Thyroid gland (tissue), 4 donors: ENCODE measurements at regions of chr4 and their contacts with region 1.

Region 1: DNA sequence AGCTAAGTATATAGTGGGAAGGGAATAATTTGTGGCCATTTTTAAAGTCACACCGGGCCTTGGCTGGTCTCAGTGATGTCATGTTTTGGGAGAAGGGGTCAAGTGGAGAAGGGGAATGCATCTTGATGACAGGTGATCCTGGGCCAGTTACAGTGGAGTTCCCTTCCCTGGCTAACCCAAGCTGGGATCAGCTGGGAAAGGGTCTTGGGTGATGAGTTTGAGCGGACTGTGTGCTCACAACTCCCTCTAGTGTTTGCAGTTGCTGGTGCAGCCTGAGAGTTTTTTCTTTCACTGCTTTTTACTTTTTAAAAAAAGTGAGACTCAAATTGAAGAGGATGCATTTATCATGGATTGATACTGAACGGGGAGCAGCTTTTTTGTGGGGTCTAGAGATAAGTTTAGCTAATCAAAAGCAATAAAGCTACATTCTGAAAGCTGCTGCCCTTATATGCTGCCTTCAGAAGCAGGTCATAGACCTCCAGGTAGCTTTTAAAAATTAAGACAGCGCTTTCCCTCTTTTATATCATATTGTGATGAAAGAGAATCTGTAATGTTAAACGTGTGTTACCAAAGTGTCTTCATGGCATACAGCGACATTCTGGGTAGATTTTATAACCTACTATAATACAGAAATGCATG is 164.7 kb downstream of the DCLK2 start:
- DNase-seq: peak; percentile 26 to 29
- H3K4me3 ChIP-seq: no peak overlapping the region
- H3K27ac ChIP-seq: no peak overlapping the region
- H3K4me1 ChIP-seq: peaks cover 0 to 7% of the 10 kb centered on the region in 2 donors
- H3K27me3 ChIP-seq: no peaks in the 10 kb centered on the region
- CTCF ChIP-seq: peak; percentile 77 to 90 (median 86)
- POLR2A ChIP-seq: no peak

Region 2: DNA sequence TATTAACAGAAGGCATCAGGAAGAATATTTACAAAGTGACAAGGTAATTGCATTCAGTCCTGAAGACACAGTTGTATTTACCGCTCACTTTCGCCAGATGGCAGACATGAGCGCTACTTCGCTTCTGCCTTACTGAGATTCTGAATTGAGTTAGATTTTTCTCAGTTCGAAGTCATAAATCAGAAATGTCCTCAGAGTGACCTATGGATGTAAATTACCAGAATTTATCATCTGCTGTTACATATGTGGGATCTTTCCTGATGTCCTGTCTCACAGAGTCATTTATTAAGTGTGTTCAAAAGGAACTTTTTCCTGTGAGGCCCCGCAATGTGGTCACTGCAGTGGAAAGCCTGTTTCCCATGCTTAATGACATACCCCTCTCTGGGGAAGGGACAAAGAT is 262.0 kb before region 1 on chr4:
- intact Hi-C with region 1: loop called (anchors 10 kb)
- DNase-seq: peak; percentile 64 to 70
- H3K4me3 ChIP-seq: no peak overlapping the region
- H3K27ac ChIP-seq: no peak overlapping the region
- H3K4me1 ChIP-seq: peaks cover 20 to 34% of the 10 kb centered on the region in 2 donors
- H3K27me3 ChIP-seq: no peaks in the 10 kb centered on the region
- CTCF ChIP-seq: peak; percentile 62 to 82 (median 73)
- POLR2A ChIP-seq: no peak

Region 3: GRCh38 chr4:150010525-150011126 is 232.3 kb before region 1 on chr4:
- intact Hi-C with region 1: loop called (anchors 10 kb)
- DNase-seq: peak; percentile 59 to 60
- H3K4me3 ChIP-seq: no peak overlapping the region
- H3K27ac ChIP-seq: no peak overlapping the region
- H3K4me1 ChIP-seq: peaks cover 15 to 16% of the 10 kb centered on the region in 2 donors
- H3K27me3 ChIP-seq: no peaks in the 10 kb centered on the region
- CTCF ChIP-seq: peak; percentile 24 to 76 (median 57)
- POLR2A ChIP-seq: no peak

Region 4: GRCh38 chr4:150209140-150209829 is 33.7 kb before region 1 on chr4:
- intact Hi-C with region 1: no loop called
- DNase-seq: peak; percentile 42 to 57
- H3K4me3 ChIP-seq: no peak overlapping the region
- H3K27ac ChIP-seq: no peak overlapping the region
- H3K4me1 ChIP-seq: peaks cover 0 to 5% of the 10 kb centered on the region in 2 donors
- H3K27me3 ChIP-seq: no peaks in the 10 kb centered on the region
- CTCF ChIP-seq: peak in 5 of 6 experiments; percentile 12 to 43 (median 34)
- POLR2A ChIP-seq: no peak